ENCODE measurements at regions of chr5 and their contacts with region 1.

Region 1: DNA sequence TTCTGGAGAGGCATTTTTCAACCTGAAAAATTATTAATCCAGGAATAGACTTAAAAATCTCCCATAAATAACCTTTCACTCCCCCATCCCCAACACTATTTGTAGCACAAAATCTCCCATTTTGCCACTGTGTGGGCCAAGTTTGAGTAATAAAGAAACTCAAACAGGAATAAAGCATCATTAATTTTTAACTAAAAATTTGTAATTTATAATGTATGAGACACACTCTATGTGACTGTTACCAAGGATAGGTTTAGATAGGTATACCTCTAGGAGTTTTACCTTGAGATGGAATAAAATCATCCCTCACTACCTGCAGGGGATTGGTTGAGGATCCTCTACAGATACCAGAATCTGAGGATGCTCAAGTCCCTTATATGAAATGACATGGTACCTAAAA is 30.1 kb downstream of the CHD1 start:
- H3K4me3 Mint-ChIP-seq: no peak overlapping the region
- H3K27ac Mint-ChIP-seq: no peak overlapping the region
- H3K4me1 Mint-ChIP-seq: no peaks in the 10 kb centered on the region
- H3K27me3 Mint-ChIP-seq: no peaks in the 10 kb centered on the region

Region 2: DNA sequence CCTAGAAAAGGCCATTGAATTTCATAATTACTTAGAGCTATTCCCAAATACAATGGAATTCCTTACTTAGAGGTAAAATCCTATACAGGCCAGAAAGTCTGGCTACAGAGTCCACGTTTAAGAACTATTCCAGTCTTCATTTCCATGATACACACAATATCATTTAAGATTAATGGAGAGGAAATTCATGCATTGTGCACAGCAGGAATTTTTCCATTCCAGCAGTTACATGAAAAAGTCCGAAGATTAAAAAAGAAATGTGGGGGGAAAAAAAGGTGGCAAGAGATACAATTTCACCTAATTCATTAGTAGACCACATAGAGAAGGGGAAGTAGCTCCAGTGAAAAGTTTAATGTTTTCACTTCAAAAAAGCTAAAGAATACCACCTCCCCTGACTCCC is 33.1 kb before region 1 on chr5:
- intact Hi-C with region 1: loop called (anchors 5 kb)
- H3K4me3 Mint-ChIP-seq: no peak overlapping the region
- H3K27ac Mint-ChIP-seq: no peak overlapping the region
- H3K4me1 Mint-ChIP-seq: no peaks in the 10 kb centered on the region
- H3K27me3 Mint-ChIP-seq: no peaks in the 10 kb centered on the region

Measured in dendritic cell treated with granulocyte-macrophage colony-stimulating factor and Interleukin-4, amounts not matched to agents 40 ng/mL and 50 ng/mL, for 4 days (primary cell).